Psoas muscle (tissue), 8 donors: ENCODE measurements at regions of chr1 and their contacts with region 1.

Region 1: GRCh38 chr1:169711469-169712281 is at the start of gene SELL:
- DNase-seq: peak in 1 of 2 donors; percentile 15
- ATAC-seq: peak; percentile 58 to 91 (median 84)
- H3K4me3 ChIP-seq: peak within 1 kb of the TSS; percentile 48
- H3K27ac ChIP-seq: no peak within 1 kb of the TSS
- H3K4me1 ChIP-seq: no peaks in the 10 kb centered on the region
- H3K27me3 ChIP-seq: peaks cover 0 to 3% (median 0%) of the 10 kb centered on the region in 3 donors
- CTCF ChIP-seq: peak; percentile 70
- total RNA-seq, gene SELL: 1.1 to 3.1 (median 1.8) TPM

Region 2: GRCh38 chr1:169586395-169587255 is 125.0 kb before region 1 on chr1 and contains the start of gene F5:
- intact Hi-C with region 1: loop called in 1 of 2 experiments (anchors 5 kb)
- DNase-seq: peak; percentile 55 to 78
- ATAC-seq: peak; percentile 75 to 95 (median 92)
- H3K4me3 ChIP-seq: peak within 1 kb of the TSS; percentile 28
- H3K27ac ChIP-seq: no peak within 1 kb of the TSS
- H3K4me1 ChIP-seq: peaks cover 3% of the 10 kb centered on the region
- H3K27me3 ChIP-seq: peaks cover 0 to 2% (median 0%) of the 10 kb centered on the region in 3 donors
- CTCF ChIP-seq: peak; percentile 43
- total RNA-seq, gene F5: 0.07 to 0.22 (median 0.08) TPM in 3 of 4 donors, not detected in the other

Region 3: GRCh38 chr1:169595764-169596711 is 115.6 kb before region 1 on chr1:
- intact Hi-C with region 1: loop called in 1 of 2 experiments (anchors 5 kb)
- DNase-seq: no peak
- ATAC-seq: no peak
- H3K4me3 ChIP-seq: no peak overlapping the region
- H3K27ac ChIP-seq: no peak overlapping the region
- H3K4me1 ChIP-seq: no peaks in the 10 kb centered on the region
- H3K27me3 ChIP-seq: peaks cover 0 to 3% (median 0%) of the 10 kb centered on the region in 3 donors
- CTCF ChIP-seq: no peak

Region 4: DNA sequence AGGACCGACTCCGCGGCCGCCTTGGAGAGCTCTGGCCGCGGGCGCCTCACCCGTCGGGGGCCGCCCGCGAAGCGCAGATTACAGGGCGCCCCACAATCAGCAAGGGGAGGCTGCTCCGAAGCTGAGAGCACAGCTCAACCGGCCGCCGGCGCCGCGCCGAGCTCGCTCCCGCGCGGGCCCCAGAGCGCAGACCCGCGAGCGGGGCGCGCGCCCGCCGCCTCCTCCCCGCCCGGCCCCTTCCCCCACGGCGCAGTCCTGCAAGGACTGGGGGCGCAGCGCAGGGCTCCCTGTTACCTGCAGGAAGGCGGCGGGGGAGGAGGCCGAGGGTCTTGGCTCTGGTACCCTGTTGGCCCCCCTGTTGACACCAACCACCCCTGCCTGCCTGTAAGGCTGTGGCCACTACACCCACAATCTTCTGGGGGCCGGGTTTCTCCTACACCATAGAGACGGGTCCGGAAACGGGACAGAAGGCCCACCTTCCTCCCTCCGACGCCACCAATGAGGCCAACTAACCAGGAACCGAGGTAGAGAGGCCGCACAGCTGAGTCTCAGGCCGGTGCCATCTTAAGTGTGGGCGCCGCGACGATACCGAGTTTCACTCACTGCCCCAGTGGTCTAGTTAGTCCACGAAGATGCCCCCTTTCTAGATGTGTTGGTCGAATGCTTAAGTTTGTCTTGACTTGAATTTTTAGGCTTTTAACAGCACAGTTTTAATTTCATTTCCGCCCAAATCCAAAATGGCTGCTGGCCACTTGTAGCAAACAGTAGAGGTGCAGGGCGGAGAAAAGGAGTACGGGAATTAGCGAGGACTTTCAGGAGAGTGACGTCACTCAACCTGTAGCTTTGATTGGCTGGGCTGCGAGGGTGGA is 182.1 kb after region 1 on chr1 and contains the start of gene SCYL3:
- intact Hi-C with region 1: no loop called
- DNase-seq: peak; percentile 90 to 96
- ATAC-seq: peak; percentile 97 to 98 (median 98)
- H3K4me3 ChIP-seq: peak within 1 kb of the TSS; percentile 77
- H3K27ac ChIP-seq: peak within 1 kb of the TSS; percentile 96
- H3K4me1 ChIP-seq: peaks cover 16% of the 10 kb centered on the region
- H3K27me3 ChIP-seq: peaks cover 0 to 7% (median 0%) of the 10 kb centered on the region in 3 donors
- CTCF ChIP-seq: no peak
- total RNA-seq, gene SCYL3: 6.7 to 8.5 (median 7.4) TPM